Mammary epithelial cell (primary cell): ENCODE measurements at regions of chr17 and their contacts with region 1.

Region 1: DNA sequence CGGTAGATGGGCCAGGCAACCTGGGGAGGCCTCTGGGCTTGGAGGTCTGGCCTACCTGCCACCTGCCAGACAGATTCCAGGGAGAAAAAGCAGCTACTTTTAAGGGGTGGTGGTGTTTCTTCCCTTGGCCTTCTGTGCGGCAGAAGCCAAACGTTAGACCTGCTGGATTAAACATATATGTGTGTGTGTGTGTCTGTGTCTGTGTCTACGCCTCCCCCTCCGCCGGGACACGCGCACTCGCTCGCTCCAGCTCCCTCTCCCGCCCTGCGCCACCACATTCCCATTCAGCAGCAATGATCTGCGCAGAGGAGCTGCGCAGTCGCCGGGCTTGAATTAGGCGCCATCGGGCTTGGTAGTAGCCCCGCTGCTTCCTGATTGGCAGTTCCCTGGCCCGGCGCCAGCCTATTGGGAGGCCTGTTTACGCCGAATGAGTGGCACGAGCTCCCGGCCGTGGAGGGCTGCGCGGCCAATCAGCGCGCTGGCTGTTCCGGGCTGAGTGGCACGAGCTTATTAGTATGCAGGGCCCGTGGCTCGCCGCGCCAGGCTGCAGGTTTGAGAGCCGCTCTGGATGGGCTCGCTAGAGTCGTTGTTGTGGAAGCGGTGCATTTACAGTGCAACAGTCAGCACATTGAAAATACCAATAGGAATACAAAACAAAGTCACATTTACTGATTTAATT is at the start of gene BAHCC1:
- DNase-seq: peak; percentile 100
- H3K4me3 ChIP-seq: peak within 1 kb of the TSS; percentile 65 to 81 (median 76)
- H3K27ac ChIP-seq: peak within 1 kb of the TSS; percentile 72
- H3K4me1 ChIP-seq: peaks cover 39% of the 10 kb centered on the region
- H3K27me3 ChIP-seq: no peaks in the 10 kb centered on the region
- CTCF ChIP-seq: no peak
- total RNA-seq, gene BAHCC1: 2.2 to 9.1 TPM

Region 2: GRCh38 chr17:81253358-81254131 is 141.5 kb before region 1 on chr17:
- CTCF ChIA-PET with region 1: no interaction called
- dilution Hi-C with region 1: no loop called
- in situ Hi-C with region 1: no loop called
- intact Hi-C with region 1: loop called (anchors 2 kb)
- DNase-seq: no peak
- H3K4me3 ChIP-seq: no peak overlapping the region
- H3K27ac ChIP-seq: no peak overlapping the region
- H3K4me1 ChIP-seq: no peaks in the 10 kb centered on the region
- H3K27me3 ChIP-seq: no peaks in the 10 kb centered on the region
- CTCF ChIP-seq: peak; percentile 61 to 66

Region 3: DNA sequence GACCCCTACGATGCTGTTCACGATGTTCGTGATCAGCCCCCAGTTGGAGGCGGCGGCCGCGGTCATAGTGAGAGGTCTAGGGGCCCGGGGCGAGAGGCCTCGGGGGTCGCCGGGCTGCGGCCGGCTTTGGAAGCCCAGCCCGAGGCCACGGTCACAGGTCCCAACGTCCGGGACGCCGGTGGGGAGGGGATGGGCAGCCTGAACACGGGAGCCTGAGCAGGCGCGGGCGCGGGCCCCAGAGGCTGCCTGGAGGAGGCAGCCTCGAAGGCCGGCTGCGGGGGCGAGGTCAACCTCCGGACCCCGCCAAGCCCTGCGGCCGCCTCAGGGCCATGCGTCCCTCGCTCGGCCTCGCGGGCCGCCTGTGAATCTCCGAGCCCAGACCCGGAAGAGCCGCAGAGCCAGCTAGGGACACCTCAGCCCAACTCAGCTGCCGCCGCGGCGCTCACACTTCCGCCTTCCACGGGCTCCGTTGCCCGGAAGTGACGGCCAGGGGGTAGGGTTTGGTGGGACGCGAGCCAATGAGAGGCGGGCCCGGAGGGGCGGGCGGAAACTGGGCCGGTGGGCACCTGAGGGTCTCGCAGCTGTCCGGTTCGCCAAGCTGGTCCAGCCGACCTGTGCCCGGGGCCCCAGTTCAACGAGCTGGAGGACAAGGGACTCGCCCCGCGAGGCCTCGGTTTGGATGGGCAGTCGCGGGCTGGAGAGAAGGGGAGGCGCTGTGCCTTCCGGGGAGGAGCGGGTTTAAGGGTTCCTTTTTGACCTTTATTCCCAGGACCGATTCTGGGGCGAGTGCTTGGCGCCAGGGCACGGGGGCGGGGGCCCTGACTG is 100.0 kb before region 1 on chr17 and contains the start of gene SLC38A10:
- CTCF ChIA-PET with region 1: no interaction called
- dilution Hi-C with region 1: no loop called
- in situ Hi-C with region 1: no loop called
- intact Hi-C with region 1: loop called (anchors 1 kb)
- DNase-seq: peak; percentile 83
- H3K4me3 ChIP-seq: peak within 1 kb of the TSS; percentile 71 to 87 (median 71)
- H3K27ac ChIP-seq: peak within 1 kb of the TSS; percentile 45
- H3K4me1 ChIP-seq: peaks cover 11% of the 10 kb centered on the region
- H3K27me3 ChIP-seq: no peaks in the 10 kb centered on the region
- CTCF ChIP-seq: peak in 1 of 2 donors; percentile 5
- total RNA-seq, gene SLC38A10: 36.5 to 71.7 TPM

Region 4: DNA sequence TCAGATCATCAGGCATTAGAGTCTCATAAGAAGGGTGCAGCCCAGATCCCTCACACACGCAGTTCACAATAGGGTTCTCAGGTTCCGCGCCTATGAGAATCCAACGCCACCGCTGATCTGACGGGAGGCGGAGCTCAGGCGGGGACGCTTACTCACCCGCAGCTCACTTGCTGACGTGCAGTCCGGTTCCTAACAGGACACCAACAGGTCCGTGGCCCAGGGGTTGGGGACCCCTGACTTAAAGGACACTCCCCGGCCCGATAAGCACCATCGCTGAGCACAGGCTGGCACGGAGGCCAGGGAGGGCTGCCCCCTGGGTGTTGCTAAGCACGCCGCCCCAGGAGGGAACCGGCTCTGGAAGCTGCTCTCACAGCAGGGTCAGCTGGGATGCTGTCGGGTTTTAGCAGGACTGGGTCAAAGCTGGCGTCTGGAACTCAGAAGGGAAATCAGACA is 29.9 kb before region 1 on chr17:
- CTCF ChIA-PET with region 1: no interaction called
- dilution Hi-C with region 1: no loop called
- in situ Hi-C with region 1: no loop called
- intact Hi-C with region 1: loop called (anchors 2 kb)
- DNase-seq: peak; percentile 82
- H3K4me3 ChIP-seq: peak overlapping the region in 2 of 3 experiments; percentile 13 to 14
- H3K27ac ChIP-seq: peak overlapping the region; percentile 48
- H3K4me1 ChIP-seq: peaks cover 25% of the 10 kb centered on the region
- H3K27me3 ChIP-seq: peaks cover 5% of the 10 kb centered on the region
- CTCF ChIP-seq: no peak

Region 5: DNA sequence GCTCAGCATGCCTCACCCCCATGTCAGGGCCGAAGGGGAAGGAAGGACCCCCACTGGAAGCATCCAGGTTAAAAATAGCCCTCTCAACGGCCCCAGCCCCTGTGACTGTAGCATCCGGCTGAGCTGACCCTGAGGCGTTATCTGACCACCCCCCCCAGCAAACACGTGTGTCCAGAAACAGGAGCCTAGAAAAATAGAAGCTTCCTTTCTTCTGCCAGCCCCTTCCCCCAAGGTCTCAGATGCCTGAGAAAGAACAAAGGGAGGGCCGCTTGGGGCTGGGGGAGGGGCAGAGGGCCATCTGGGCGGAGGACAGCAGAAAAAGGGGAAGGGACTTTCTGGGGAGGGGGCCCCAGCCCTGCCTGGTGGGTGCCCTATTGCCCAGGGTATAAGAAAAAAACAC is 61.7 kb after region 1 on chr17:
- CTCF ChIA-PET with region 1: no interaction called
- dilution Hi-C with region 1: loop called (anchors 5 kb)
- in situ Hi-C with region 1: no loop called
- intact Hi-C with region 1: no loop called
- DNase-seq: no peak
- H3K4me3 ChIP-seq: no peak overlapping the region
- H3K27ac ChIP-seq: no peak overlapping the region
- H3K4me1 ChIP-seq: no peaks in the 10 kb centered on the region
- H3K27me3 ChIP-seq: no peaks in the 10 kb centered on the region
- CTCF ChIP-seq: no peak

Region 6: DNA sequence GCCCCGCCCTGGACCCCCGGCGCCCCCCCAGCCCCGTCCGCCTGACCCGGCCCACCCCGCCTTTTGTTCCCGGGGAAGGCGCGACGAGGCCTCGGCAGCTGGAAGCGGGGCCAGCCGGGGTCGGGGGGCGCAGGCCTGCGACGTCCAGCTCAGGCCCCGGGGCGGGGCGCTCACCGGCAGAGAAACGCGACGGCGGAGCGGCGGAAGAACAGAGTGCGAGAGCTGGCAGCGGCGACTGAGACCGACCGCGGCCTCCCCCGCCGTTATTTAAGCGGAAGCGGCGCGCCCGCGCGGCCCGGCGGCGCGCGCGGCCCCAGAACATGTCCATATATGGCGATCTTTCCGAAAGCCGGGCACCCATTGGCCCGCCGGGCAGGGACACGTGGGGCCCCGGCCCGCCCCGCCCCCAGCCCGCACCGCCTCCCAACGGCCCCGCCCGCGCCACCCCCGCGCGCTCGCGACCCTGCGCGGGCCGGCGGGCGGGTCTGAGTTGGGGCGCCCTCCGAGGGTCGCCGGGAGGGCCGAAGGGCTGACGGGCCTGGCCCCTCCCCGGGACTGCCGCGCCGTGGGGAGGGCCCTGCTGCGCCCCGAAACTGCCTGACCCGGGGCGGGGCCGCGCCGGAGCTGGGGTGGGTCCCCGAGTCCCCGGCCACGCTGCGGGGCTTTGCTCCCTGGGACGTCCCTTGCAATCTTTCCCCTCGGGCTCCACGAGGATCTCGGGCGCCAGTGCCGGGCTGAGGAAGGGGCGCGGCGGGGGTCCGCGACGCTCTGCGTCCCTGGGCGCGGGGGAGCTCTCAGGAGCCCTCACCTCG is 117.7 kb after region 1 on chr17 and contains the start of gene ACTG1:
- CTCF ChIA-PET with region 1: interaction called, 3 read pairs
- dilution Hi-C with region 1: loop called (anchors 5 kb)
- in situ Hi-C with region 1: loop called in 1 of 2 experiments (anchors 5 kb)
- intact Hi-C with region 1: no loop called
- DNase-seq: peak; percentile 91
- H3K4me3 ChIP-seq: peak within 1 kb of the TSS; percentile 90 to 100 (median 93)
- H3K27ac ChIP-seq: peak within 1 kb of the TSS; percentile 70
- H3K4me1 ChIP-seq: peaks cover 40% of the 10 kb centered on the region
- H3K27me3 ChIP-seq: no peaks in the 10 kb centered on the region
- CTCF ChIP-seq: no peak
- total RNA-seq, gene ACTG1: 3,950 to 24,255 TPM